ENCODE measurements at regions of chr3 and their contacts with region 1.

Region 1: GRCh38 chr3:23341147-23341838 is 138.2 kb downstream of the UBE2E2 start:
- DNase-seq: peak; percentile 69
- H3K4me3 ChIP-seq: peak overlapping the region; percentile 47
- H3K27ac ChIP-seq: peak overlapping the region; percentile 94
- H3K4me1 ChIP-seq: peaks cover 87% of the 10 kb centered on the region
- CTCF ChIP-seq: no peak

Region 2: DNA sequence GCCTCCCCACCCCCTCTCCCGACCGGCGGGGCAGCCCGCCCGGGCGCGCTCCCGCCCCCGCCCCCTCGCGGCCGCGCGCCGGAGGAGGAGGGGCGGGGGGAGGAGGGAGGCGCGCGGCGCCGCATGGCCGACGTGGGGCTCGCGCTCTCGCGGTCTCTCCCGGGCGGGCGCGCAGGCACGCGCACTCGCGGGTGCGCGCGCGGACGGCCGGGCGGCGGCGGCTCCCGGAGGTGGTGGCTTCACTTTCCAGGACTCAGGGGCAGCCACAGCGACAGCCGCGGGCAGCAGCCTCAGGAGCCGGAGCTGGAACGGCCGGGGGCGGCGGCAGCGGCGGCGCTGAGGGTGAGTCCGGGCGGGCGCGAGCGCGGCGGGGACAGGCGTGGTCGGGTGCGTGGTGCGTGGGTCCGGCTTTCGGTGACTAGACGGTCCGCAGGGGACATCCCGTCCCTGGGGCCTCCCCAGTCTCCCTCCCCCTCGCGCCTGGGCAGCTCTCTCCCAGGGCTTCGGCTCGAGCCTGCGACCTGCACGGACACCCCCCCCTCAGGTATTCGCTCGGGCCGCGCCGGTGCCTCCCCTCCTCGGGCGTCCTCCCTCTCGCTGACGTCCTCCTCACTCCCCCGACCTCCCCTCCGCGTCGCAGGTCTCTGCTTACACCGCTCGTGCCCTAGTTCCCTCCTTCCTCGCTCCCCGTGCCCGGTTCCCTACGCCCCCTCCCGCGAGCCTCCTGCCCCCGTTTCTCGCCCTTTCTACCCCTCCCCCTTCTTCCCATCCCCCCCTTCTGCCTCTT is 138.2 kb before region 1 on chr3 and contains the start of gene UBE2E2:
- CTCF ChIA-PET with region 1: no interaction called
- POLR2A ChIA-PET with region 1: interaction called, 4 read pairs
- intact Hi-C with region 1: loop called (anchors 10 kb)
- DNase-seq: peak; percentile 88
- H3K4me3 ChIP-seq: peak within 1 kb of the TSS; percentile 99
- H3K27ac ChIP-seq: peak within 1 kb of the TSS; percentile 33
- H3K4me1 ChIP-seq: peaks cover 29% of the 10 kb centered on the region
- CTCF ChIP-seq: no peak
- total RNA-seq, gene UBE2E2: 41.1 and 63.2 TPM in 2 replicates

Region 3: DNA sequence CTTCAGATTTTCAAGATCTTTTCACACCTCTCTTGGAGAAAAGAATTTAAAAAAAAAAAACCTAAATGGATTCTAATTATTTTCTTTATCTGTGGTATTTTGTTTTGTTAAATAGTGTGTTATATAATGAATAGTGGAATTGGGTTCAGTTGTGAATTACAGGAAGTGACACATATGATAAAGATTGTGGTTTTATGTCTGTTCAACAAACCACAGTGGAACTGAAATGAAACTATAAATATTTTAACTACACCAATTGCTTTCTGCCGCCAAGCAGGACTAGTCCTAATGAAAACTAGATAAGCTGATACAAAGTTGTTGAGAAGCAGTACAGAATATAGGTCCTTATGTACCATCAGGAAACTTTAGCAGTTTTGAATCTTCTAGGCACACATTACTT is 16.5 kb before region 1 on chr3:
- CTCF ChIA-PET with region 1: interaction called, 5 read pairs
- POLR2A ChIA-PET with region 1: interaction called, 17 read pairs
- intact Hi-C with region 1: no loop called
- DNase-seq: peak; percentile 73
- H3K4me3 ChIP-seq: peak overlapping the region; percentile 49
- H3K27ac ChIP-seq: peak overlapping the region; percentile 80
- H3K4me1 ChIP-seq: peaks cover 43% of the 10 kb centered on the region
- CTCF ChIP-seq: no peak

Region 4: GRCh38 chr3:23377928-23378672 is 36.8 kb after region 1 on chr3:
- CTCF ChIA-PET with region 1: no interaction called
- POLR2A ChIA-PET with region 1: interaction called, 14 read pairs
- intact Hi-C with region 1: no loop called
- DNase-seq: peak; percentile 60
- H3K4me3 ChIP-seq: peak overlapping the region; percentile 46
- H3K27ac ChIP-seq: peak overlapping the region; percentile 79
- H3K4me1 ChIP-seq: peaks cover 72% of the 10 kb centered on the region
- CTCF ChIP-seq: no peak

Region 5: DNA sequence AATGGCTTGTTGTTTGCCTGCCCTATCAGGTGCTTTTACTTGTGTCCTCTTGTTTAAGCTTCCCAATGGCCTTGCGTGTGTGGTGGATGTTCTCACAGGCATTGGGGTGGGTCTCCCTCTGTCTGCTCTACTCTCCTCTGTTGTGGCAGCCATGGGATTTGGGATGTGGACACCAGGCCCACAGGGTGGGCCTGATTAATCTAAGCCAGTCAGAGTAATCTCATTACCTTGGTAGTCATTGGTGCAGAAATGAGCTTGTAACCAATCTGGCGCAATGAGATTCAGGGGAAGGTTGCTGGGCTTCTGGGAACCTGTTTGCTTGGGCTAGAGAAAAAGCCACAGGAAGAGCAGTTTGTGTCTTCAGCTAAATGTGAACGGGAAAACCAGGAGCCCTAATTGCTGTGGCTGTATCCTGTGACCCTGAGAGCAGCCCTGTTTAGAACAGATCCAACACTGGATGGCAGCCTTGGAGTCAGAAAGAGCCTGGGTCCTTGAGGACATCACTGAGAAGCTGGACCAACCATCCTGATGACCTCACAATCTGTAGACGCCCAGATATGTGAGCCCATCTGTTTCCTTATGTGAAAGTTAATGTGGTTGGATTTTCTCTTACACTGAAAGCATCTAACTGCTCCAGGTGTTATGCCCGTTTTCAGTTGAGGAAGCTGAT is 307.2 kb after region 1 on chr3:
- CTCF ChIA-PET with region 1: no interaction called
- POLR2A ChIA-PET with region 1: no interaction called
- intact Hi-C with region 1: loop called (anchors 5 kb)
- DNase-seq: no peak
- H3K4me3 ChIP-seq: no peak overlapping the region
- H3K27ac ChIP-seq: peak overlapping the region; percentile 49
- H3K4me1 ChIP-seq: peaks cover 39% of the 10 kb centered on the region
- CTCF ChIP-seq: 0 out of 2 replicates have a peak, but pooled peaks have one; percentile 23